Naive thymus-derived CD4-positive, alpha-beta T cell (primary cell): ENCODE measurements at regions of chr13 and their contacts with region 1.

Region 1: DNA sequence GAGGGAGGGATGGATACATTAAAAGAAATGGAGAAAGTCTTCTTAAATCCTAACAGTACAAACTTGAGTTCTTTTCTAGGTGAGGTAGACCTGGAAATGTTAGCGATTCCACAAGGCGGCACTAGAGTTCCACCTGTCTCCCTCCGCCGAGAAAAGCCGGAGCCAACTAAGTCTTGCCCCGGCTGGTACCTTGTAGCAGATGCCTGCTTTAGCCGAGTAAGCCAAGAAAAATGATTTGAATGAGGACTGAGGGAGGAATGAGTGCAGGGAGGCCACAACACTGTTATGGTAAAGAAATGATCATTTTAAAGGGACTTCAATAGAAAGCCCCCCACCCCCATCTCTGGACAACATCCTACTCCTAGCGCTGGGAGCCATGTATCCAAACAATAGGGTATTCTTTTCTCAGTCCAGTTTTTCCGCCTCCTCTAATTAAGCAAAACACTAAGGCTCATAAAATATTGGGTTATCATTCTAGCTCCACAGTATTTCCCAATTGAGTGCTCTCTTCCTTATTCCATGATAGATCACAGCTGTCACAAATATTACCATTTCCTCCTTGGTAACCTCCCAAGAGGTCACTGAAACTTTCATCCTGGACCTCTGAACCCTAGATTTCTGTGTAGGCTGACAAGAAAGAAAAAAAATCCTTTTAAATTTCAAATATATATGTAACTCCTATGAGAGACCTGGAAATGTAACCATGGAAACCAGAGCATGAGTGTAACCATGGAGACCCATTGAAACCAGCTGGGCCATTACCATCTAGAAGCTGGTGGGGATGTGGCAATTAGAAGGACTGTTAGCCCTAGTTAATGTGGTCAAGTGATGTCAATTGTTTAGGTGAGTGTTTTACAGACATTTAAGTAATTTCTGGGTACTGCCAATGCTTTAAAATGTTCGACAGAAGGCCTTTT is 58.3 kb downstream of the GPALPP1 start:
- DNase-seq: peak; percentile 44 to 78 (median 68)
- ATAC-seq: peak; percentile 92
- H3K4me3 ChIP-seq: no peak overlapping the region
- H3K4me3 Mint-ChIP-seq: peak overlapping the region; percentile 71 to 87 (median 78)
- H3K27ac ChIP-seq: no peak overlapping the region
- H3K27ac Mint-ChIP-seq: peak overlapping the region in 1 of 9 donors; percentile 2
- H3K4me1 ChIP-seq: peaks cover 0 to 7% of the 10 kb centered on the region in 2 donors
- H3K4me1 Mint-ChIP-seq: peaks cover 4 to 17% (median 7%) of the 10 kb centered on the region in 7 donors
- H3K27me3 ChIP-seq: no peaks in the 10 kb centered on the region
- H3K27me3 Mint-ChIP-seq: peaks cover 3 to 34% (median 16%) of the 10 kb centered on the region in 5 donors

Region 2: DNA sequence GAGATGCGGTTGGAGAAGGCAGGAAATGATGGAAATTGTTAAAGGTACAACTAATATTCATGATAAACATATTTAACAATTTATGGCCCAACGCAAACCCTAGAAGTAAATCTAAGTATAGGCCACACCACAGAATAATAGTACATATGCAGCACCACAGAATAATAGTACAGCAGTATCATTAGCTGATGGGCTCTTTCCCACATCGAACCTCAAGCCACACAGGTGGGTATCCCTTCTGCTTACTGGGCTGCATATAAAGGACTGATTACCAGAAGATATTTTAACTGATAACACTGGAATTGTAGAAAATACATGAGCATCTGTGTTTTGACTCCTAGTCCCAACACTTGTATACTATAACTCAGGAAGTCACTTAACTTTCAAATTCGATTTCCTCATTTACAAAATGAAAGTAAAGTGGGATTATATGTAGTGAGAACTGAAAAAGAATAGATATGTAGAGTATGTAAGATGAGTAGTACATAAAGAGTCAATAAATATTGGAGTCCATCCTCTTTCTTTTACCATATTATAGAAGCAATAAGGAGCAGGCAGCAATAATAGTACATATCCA is 563.0 kb before region 1 on chr13:
- CTCF ChIA-PET with region 1: interaction called, 3 read pairs
- POLR2A ChIA-PET with region 1: no interaction called
- intact Hi-C with region 1: loop called in 1 of 2 experiments (anchors 5 kb)
- DNase-seq: no peak
- ATAC-seq: no peak
- H3K4me3 ChIP-seq: peak overlapping the region; percentile 38
- H3K4me3 Mint-ChIP-seq: peak overlapping the region; percentile 13 to 77 (median 72)
- H3K27ac ChIP-seq: peak overlapping the region; percentile 22
- H3K27ac Mint-ChIP-seq: peak overlapping the region in 8 of 9 donors; percentile 1 to 73 (median 52)
- H3K4me1 ChIP-seq: peaks cover 7 to 16% of the 10 kb centered on the region in 2 donors
- H3K4me1 Mint-ChIP-seq: peaks cover 6 to 25% (median 14%) of the 10 kb centered on the region in 7 donors
- H3K27me3 ChIP-seq: no peaks in the 10 kb centered on the region
- H3K27me3 Mint-ChIP-seq: no peaks in the 10 kb centered on the region

Region 3: GRCh38 chr13:44692173-44692713 is 355.4 kb before region 1 on chr13:
- CTCF ChIA-PET with region 1: no interaction called
- POLR2A ChIA-PET with region 1: no interaction called
- intact Hi-C with region 1: no loop called
- DNase-seq: no peak
- ATAC-seq: no peak
- H3K4me3 ChIP-seq: no peak overlapping the region
- H3K4me3 Mint-ChIP-seq: no peak overlapping the region
- H3K27ac ChIP-seq: no peak overlapping the region
- H3K27ac Mint-ChIP-seq: no peak overlapping the region
- H3K4me1 ChIP-seq: no peaks in the 10 kb centered on the region
- H3K4me1 Mint-ChIP-seq: no peaks in the 10 kb centered on the region
- H3K27me3 ChIP-seq: no peaks in the 10 kb centered on the region
- H3K27me3 Mint-ChIP-seq: peaks cover 6 to 30% (median 12%) of the 10 kb centered on the region in 5 donors

Region 4: DNA sequence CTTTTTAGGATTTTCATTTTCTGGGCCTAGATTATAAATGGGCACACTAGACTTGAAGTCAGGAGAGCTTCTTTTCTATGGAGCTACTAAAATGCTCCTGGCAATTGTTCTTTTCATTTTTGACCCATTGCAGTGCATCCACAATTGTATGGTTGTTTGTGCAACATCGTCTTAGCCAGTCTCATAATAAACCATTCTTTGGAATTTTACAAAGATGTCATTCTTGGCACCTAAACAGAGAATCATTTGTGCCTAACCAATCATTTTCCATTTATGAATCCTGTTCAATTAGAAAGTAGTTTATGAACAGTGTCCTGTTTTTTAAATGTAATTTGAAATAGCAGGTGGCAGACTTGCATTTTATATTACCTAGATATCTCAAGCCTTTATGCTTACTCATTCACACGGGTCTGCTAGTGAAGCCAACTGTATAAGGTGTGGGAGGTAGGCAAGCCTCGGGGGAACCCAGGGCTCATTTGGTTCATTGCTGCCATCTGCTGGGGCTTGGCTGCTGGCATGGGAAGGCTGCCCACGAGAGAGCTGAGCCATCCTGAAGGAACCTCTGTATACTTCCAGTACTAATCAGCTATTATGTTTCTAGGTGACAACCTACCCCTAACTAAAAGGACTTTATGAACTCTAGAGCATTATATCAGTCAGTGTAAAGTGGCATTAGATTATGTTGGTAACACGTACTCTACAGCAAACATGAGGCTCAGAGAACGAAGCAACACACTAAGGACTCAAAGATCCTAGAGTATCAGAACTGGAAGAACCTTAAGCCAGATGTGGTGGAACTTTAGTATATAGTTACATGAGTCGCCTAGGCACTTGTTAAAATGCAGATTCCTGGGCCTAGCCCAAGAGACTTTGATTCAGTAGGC is 233.3 kb after region 1 on chr13:
- CTCF ChIA-PET with region 1: interaction called, 10 read pairs
- POLR2A ChIA-PET with region 1: interaction called, 3 read pairs
- intact Hi-C with region 1: loop called (anchors 1 kb)
- DNase-seq: peak in 5 of 9 donors; percentile 22 to 56 (median 26)
- ATAC-seq: peak; percentile 55
- H3K4me3 ChIP-seq: no peak overlapping the region
- H3K4me3 Mint-ChIP-seq: no peak overlapping the region
- H3K27ac ChIP-seq: no peak overlapping the region
- H3K27ac Mint-ChIP-seq: no peak overlapping the region
- H3K4me1 ChIP-seq: no peaks in the 10 kb centered on the region
- H3K4me1 Mint-ChIP-seq: peaks cover 0 to 3% (median 0%) of the 10 kb centered on the region in 7 donors
- H3K27me3 ChIP-seq: no peaks in the 10 kb centered on the region
- H3K27me3 Mint-ChIP-seq: no peaks in the 10 kb centered on the region

Region 5: DNA sequence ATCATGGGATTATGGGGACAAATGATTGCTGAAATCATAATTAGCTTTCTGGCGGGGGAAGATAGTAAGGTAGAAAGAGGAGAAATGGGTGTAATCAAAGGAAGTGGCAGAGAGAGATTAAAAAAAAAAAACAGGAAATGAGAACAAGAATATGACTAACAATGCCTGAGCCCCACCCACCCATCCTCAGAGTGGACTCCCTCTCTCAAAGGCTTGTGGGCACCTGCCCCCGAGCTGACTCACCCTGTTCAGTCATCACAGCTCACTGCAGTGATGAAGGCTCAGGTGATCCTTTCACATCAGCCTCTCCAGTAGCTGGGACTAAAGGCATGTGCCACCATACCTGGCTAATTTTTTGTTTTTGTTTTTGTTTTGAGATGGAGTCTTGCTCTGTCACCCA is 319.7 kb after region 1 on chr13:
- CTCF ChIA-PET with region 1: interaction called, 5 read pairs
- POLR2A ChIA-PET with region 1: no interaction called
- intact Hi-C with region 1: loop called in 1 of 2 experiments (anchors 1 kb)
- DNase-seq: peak; percentile 38 to 93 (median 82)
- ATAC-seq: peak; percentile 99
- H3K4me3 ChIP-seq: no peak overlapping the region
- H3K4me3 Mint-ChIP-seq: peak overlapping the region; percentile 48 to 80 (median 67)
- H3K27ac ChIP-seq: peak overlapping the region; percentile 31
- H3K27ac Mint-ChIP-seq: peak overlapping the region; percentile 81 to 96 (median 90)
- H3K4me1 ChIP-seq: peaks cover 25 to 27% of the 10 kb centered on the region in 2 donors
- H3K4me1 Mint-ChIP-seq: peaks cover 48 to 62% (median 60%) of the 10 kb centered on the region in 7 donors
- H3K27me3 ChIP-seq: no peaks in the 10 kb centered on the region
- H3K27me3 Mint-ChIP-seq: no peaks in the 10 kb centered on the region

Region 6: DNA sequence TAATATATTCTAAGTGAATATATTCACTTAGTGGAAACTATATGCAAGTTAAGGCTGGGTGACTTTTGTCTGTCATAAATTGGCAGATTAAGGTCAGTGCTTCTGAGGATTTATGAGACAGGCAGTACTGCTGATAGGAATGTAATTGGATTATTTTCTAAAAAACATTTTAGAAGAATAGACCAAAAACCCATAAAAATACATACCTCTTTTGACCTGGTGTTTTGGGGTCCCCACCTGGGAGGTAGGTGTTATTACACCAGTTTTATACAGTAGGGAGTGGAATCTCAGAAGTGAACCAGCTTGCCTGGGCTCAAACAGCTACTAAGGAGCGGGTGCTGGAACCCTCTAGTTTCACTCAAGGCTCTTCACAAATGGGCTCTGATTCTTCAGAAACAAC is 442.4 kb after region 1 on chr13:
- CTCF ChIA-PET with region 1: interaction called, 6 read pairs
- POLR2A ChIA-PET with region 1: no interaction called
- intact Hi-C with region 1: loop called in 1 of 2 experiments (anchors 1 kb)
- DNase-seq: peak in 7 of 9 donors; percentile 20 to 52 (median 33)
- ATAC-seq: peak; percentile 67
- H3K4me3 ChIP-seq: no peak overlapping the region
- H3K4me3 Mint-ChIP-seq: no peak overlapping the region
- H3K27ac ChIP-seq: no peak overlapping the region
- H3K27ac Mint-ChIP-seq: peak overlapping the region in 2 of 9 donors; percentile 16 to 31
- H3K4me1 ChIP-seq: no peaks in the 10 kb centered on the region
- H3K4me1 Mint-ChIP-seq: peaks cover 0 to 6% (median 4%) of the 10 kb centered on the region in 7 donors
- H3K27me3 ChIP-seq: no peaks in the 10 kb centered on the region
- H3K27me3 Mint-ChIP-seq: no peaks in the 10 kb centered on the region